ENCODE measurements at regions of chr14 and their contacts with region 1.

Region 1: DNA sequence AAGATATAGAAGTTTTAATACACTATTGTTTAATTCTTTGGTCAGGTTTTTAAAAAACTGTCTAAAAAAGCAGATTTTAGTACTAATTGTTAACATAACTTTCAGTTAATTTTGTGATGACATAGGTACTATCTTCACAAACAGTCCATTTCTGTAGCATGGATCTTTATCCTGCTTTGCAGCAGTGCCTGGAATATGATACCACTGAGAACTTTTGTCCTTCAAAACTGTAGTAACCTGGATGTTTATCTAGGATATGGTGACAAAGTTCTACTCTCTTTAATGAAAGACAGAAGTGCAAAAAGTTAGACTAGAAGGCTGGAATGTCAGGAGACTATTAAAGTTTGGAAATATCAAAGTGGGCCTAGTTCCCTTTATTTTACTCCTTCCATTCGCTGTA is 159.9 kb downstream of the SYNE2 start:
- DNase-seq: no peak
- ATAC-seq: no peak
- H3K4me3 ChIP-seq: no peak overlapping the region
- H3K4me3 Mint-ChIP-seq: no peak overlapping the region
- H3K27ac ChIP-seq: no peak overlapping the region
- H3K27ac Mint-ChIP-seq: no peak overlapping the region
- H3K4me1 ChIP-seq: no peaks in the 10 kb centered on the region
- H3K4me1 Mint-ChIP-seq: no peaks in the 10 kb centered on the region
- H3K27me3 ChIP-seq: no peaks in the 10 kb centered on the region
- H3K27me3 Mint-ChIP-seq: no peaks in the 10 kb centered on the region

Region 2: GRCh38 chr14:63727774-63728728 is 284.7 kb before region 1 on chr14 and contains the start of gene SGPP1:
- CTCF ChIA-PET with region 1: no interaction called
- POLR2A ChIA-PET with region 1: interaction called in 1 of 2 experiments, 22 read pairs
- DNase-seq: peak; percentile 61 to 91 (median 74)
- ATAC-seq: peak; percentile 89 to 92 (median 91)
- H3K4me3 ChIP-seq: peak within 1 kb of the TSS; percentile 77 to 84
- H3K4me3 Mint-ChIP-seq: peak within 1 kb of the TSS; percentile 99 to 100 (median 99)
- H3K27ac ChIP-seq: peak within 1 kb of the TSS; percentile 76
- H3K27ac Mint-ChIP-seq: peak within 1 kb of the TSS; percentile 94 to 97
- H3K4me1 ChIP-seq: peaks cover 14 to 21% of the 10 kb centered on the region in 2 experiments
- H3K4me1 Mint-ChIP-seq: peaks cover 45 to 49% (median 49%) of the 10 kb centered on the region in 3 donors
- H3K27me3 ChIP-seq: no peaks in the 10 kb centered on the region
- H3K27me3 Mint-ChIP-seq: no peaks in the 10 kb centered on the region
- total RNA-seq, gene SGPP1: 11.4 to 15.1 (median 13.5) TPM

Region 3: DNA sequence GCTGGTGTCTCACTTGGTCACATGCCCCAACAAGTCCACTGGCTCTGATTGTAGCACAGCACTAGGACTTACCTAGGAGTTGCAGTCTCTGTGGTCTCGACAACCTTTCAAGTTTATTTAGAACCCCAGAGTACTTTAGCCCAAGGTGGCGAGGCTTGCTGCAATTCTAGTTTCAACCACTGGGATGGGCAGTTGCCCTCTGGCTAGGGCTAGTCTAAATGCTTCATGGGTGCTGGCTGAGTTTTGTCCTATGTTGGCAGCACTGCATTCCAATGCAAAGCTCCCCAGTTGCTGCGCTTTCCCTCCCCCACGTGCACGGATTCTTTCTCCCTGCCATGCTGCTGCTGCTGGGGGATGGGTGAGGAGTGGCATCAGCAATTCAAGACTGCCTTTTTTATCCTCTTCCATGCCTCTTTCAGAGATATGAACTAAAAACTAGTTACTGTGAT is 48.0 kb after region 1 on chr14:
- CTCF ChIA-PET with region 1: no interaction called
- POLR2A ChIA-PET with region 1: no interaction called
- DNase-seq: peak in 1 of 35 experiments; percentile 14
- ATAC-seq: no peak
- H3K4me3 ChIP-seq: no peak overlapping the region
- H3K4me3 Mint-ChIP-seq: no peak overlapping the region
- H3K27ac ChIP-seq: no peak overlapping the region
- H3K27ac Mint-ChIP-seq: no peak overlapping the region
- H3K4me1 ChIP-seq: no peaks in the 10 kb centered on the region
- H3K4me1 Mint-ChIP-seq: peaks cover 4 to 7% (median 5%) of the 10 kb centered on the region in 3 donors
- H3K27me3 ChIP-seq: no peaks in the 10 kb centered on the region
- H3K27me3 Mint-ChIP-seq: no peaks in the 10 kb centered on the region

Region 4: DNA sequence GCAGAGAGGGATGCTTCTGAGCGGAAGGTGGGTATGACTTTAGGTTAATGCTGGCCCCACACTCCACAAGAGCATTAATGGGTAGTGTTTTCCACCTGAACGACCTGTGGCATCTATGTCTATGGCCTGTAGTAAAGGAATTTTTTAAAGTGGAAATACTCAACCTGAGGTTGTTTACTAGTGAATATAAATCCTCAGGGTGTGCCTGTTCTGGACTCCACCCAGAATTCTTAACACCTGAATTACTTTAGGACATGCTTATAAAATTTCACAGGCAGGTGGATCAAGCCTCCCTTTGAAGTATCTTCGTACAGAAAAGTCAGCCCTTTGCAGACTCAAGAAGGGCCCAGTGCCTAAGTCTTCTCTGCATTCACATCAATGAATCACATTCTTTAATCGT is 85.4 kb after region 1 on chr14:
- CTCF ChIA-PET with region 1: interaction called in 1 of 2 experiments, 4 read pairs
- POLR2A ChIA-PET with region 1: interaction called in 1 of 2 experiments, 13 read pairs
- DNase-seq: no peak
- ATAC-seq: no peak
- H3K4me3 ChIP-seq: no peak overlapping the region
- H3K4me3 Mint-ChIP-seq: no peak overlapping the region
- H3K27ac ChIP-seq: no peak overlapping the region
- H3K27ac Mint-ChIP-seq: no peak overlapping the region
- H3K4me1 ChIP-seq: no peaks in the 10 kb centered on the region
- H3K4me1 Mint-ChIP-seq: no peaks in the 10 kb centered on the region
- H3K27me3 ChIP-seq: no peaks in the 10 kb centered on the region
- H3K27me3 Mint-ChIP-seq: no peaks in the 10 kb centered on the region

Region 5: DNA sequence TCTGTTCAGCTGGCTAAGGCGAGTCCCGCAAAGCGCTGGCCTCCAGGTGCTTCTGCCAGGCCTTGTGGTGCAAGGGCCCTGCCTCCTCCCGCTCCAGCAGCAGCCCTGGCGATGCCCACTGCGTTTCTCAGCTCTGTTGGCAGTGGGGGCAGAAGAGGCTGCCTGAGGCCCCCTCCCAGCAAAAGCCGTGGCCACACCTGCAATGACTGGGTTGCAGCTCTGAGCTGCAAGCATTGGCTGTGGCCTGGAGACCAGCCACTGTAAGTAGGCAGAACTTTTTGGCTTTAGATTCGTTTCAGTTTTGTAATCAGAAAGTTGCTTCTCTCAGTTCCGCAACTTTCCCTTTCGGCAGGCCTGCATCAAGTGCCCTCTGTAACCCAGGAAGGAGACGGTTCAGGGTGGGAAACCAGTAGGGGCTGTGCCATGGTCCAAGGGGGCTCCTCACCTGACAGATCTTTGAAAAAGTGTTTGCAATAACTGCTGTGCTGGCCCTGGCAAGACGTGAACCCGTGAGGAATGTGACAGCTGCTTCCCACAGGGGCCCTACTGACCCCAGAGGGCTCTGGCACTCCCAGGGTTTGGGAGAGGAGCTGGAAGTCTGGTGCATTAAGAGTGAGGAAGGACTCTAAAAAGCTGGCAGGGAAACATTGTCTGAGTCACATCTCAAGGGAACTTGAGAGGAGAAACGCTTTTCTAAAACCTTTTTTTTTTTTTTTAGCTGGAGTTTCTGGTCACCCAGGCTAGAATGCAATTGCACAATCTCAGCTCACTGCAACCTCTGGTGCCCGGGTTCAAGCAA is 1144.0 kb after region 1 on chr14:
- CTCF ChIA-PET with region 1: no interaction called
- POLR2A ChIA-PET with region 1: no interaction called
- DNase-seq: no peak
- ATAC-seq: no peak
- H3K4me3 ChIP-seq: no peak overlapping the region
- H3K4me3 Mint-ChIP-seq: no peak overlapping the region
- H3K27ac ChIP-seq: no peak overlapping the region
- H3K27ac Mint-ChIP-seq: no peak overlapping the region
- H3K4me1 ChIP-seq: no peaks in the 10 kb centered on the region
- H3K4me1 Mint-ChIP-seq: no peaks in the 10 kb centered on the region
- H3K27me3 ChIP-seq: no peaks in the 10 kb centered on the region
- H3K27me3 Mint-ChIP-seq: peaks cover 0 to 3% of the 10 kb centered on the region in 2 donors